PC-9 (cell line): ENCODE measurements at regions of chr5 and their contacts with region 1.

Region 1: DNA sequence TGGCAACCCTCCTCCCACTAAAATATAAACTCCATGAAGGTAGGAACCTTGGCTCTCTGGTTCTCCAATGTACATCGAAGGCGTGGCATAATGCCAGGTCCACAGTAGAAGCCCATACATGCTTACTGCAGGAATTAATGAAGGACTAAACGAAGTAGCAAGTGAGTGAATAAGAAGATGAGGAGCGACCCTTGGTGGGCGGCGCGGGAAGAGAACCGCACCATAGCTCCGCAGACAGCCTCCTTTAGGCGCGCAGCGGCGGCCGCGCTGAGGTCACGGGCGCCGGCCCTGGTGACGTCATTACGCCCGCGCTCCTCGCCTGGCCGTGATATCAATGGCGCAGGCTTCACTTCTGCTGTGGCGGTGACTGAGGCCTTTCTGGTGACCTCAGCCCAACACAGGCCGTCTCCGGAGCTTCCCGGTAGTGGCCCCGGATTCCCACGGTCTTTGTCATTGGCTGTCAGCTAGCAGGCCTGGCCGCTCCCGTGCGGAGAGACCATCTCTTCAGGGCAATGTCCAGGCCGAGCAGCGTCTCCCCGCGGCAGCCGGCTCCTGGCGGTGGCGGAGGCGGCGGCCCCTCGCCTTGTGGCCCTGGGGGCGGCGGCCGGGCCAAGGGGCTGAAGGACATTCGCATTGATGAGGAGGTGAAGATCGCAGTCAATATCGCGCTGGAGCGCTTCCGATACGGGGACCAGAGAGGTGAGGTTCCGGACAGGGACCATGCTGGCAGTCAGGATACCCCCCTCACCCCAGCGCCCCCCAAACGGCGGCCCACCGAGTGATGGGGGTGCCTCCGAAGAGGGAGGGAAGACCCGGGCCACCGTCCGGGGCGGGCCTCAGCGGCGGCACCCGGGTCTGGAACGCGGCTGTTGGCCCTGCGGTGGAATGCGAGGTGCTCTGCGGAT is at the start of gene YTHDC2:
- DNase-seq: peak; percentile 74 to 81
- H3K4me3 ChIP-seq: peak within 1 kb of the TSS; percentile 81
- H3K27ac ChIP-seq: peak within 1 kb of the TSS; percentile 64
- H3K4me1 ChIP-seq: peaks cover 22% of the 10 kb centered on the region
- H3K27me3 ChIP-seq: no peaks in the 10 kb centered on the region
- CTCF ChIP-seq: no peak
- total RNA-seq, gene YTHDC2: 14.9 and 18.6 TPM in 2 replicates

Region 2: DNA sequence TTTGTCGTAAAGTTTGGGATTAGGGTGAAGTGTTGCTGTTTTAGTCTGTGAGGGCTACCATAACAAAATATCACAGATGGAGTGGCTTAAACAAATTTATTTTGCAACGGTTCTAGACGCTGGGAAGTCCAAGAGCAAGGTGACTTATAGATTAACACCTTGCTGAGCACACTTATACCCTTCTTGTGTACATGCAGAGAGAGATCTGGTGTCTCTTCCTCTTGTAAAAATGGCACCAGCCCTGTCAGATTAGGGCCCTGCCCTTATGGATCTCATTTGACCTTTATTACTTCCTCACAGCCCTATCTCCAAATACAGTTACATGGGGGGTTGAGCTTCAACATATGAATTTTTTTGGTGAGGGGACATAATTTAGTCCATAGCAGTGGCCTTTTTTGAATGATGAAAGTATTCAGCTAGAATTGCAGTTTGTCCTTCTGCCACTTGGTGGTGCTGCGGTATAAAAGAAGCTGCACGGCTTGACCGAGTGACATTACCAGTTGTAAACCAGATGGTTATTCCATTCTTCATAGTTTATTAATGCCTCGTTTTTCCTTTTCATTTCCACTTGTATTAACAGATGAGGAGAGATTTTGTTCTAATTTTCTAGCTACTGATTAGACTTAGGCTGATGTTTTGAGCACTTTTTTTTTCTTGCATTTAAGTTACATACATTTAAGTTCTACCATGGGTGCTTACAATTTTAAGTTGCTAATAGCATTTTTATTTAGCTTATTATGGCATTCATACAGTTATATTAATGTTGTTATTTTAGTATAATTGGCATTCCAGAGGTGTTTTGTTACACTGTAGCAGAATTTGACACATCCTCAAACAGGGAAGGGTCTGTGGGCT is 517.6 kb before region 1 on chr5:
- CTCF ChIA-PET with region 1: interaction called, 6 read pairs
- POLR2A ChIA-PET with region 1: no interaction called
- intact Hi-C with region 1: loop called (anchors 1 kb)
- DNase-seq: peak; percentile 39 to 60
- H3K4me3 ChIP-seq: no peak overlapping the region
- H3K27ac ChIP-seq: no peak overlapping the region
- H3K4me1 ChIP-seq: no peaks in the 10 kb centered on the region
- H3K27me3 ChIP-seq: no peaks in the 10 kb centered on the region
- CTCF ChIP-seq: peak; percentile 96

Region 3: DNA sequence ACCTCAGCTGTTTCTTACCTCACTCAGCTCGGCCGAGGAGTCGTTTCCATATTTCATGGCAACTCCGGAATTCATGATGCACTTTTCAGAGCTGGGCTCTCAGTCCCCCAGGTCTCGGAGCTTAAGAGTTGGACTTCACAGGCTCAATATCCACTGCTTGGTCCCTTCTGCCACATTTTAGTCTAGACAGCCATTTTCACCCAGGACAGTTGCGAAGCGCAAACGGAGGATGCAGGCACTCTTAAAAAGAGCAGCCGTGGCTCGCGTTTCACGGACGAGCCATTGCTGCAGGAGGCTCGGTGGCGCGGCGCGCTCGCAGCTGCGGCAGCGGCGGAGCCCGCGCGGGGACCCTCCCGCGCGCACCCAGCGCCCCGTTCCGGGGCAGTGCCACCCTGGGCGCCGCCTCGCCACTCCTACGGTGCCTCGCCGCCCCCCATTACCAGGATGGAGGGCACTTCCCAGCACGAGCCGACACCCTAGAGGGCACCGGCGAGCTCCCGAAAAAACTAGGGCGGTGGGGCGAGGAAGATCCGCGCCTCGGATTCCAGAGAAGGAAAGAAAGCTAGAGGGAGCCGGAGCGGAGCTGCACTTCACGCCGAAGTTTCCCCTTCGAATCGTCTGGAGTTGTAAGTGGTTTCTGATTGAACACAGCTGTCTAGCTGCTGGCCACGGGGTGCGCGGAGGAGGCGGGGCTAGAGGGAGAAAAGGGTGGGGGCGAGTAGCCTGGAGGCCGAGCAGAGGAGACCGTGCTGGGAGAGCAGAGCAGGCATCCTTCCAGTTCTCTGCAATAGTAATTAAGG is 219.1 kb before region 1 on chr5:
- CTCF ChIA-PET with region 1: interaction called, 13 read pairs
- POLR2A ChIA-PET with region 1: interaction called, 4 read pairs
- intact Hi-C with region 1: no loop called
- DNase-seq: peak; percentile 69 to 70
- H3K4me3 ChIP-seq: peak overlapping the region; percentile 92
- H3K27ac ChIP-seq: no peak overlapping the region
- H3K4me1 ChIP-seq: peaks cover 12% of the 10 kb centered on the region; the same call in 1 of the 2 replicates
- H3K27me3 ChIP-seq: no peaks in the 10 kb centered on the region
- CTCF ChIP-seq: no peak

Region 4: GRCh38 chr5:113336975-113337374 is 176.7 kb before region 1 on chr5:
- CTCF ChIA-PET with region 1: interaction called, 5 read pairs
- POLR2A ChIA-PET with region 1: no interaction called
- intact Hi-C with region 1: loop called (anchors 2 kb)
- DNase-seq: peak in 1 of 2 experiments; percentile 39
- H3K4me3 ChIP-seq: no peak overlapping the region
- H3K27ac ChIP-seq: no peak overlapping the region
- H3K4me1 ChIP-seq: no peaks in the 10 kb centered on the region
- H3K27me3 ChIP-seq: no peaks in the 10 kb centered on the region
- CTCF ChIP-seq: peak; percentile 53; the same call in 1 of the 2 replicates

Region 5: GRCh38 chr5:113378959-113379541 is 134.6 kb before region 1 on chr5:
- CTCF ChIA-PET with region 1: interaction called, 6 read pairs
- POLR2A ChIA-PET with region 1: interaction called, 3 read pairs
- intact Hi-C with region 1: loop called (anchors 1 kb)
- DNase-seq: peak in 1 of 2 experiments; percentile 35
- H3K4me3 ChIP-seq: no peak overlapping the region
- H3K27ac ChIP-seq: no peak overlapping the region
- H3K4me1 ChIP-seq: no peaks in the 10 kb centered on the region
- H3K27me3 ChIP-seq: no peaks in the 10 kb centered on the region
- CTCF ChIP-seq: peak; percentile 86

Region 6: DNA sequence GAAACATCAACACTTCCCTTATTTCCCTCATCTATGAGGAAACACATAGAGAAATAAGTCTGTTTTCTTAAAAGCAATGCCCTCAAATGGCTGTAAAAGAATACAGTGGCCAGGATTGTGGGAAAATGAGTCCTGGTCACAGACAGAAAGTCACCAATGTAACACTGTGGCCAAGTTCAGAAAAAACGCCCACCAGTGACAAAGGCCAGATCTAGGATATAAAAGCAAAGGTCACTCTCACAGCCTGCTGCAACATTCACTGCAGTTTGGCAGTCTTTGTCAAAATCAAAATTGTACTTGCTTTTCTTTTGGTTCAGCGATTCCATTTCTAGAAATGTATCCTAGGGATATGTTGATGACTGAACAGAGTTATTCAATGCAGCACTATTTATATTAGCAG is 109.4 kb before region 1 on chr5:
- CTCF ChIA-PET with region 1: interaction called, 19 read pairs
- POLR2A ChIA-PET with region 1: interaction called, 5 read pairs
- intact Hi-C with region 1: no loop called
- DNase-seq: no peak
- H3K4me3 ChIP-seq: no peak overlapping the region
- H3K27ac ChIP-seq: no peak overlapping the region
- H3K4me1 ChIP-seq: no peaks in the 10 kb centered on the region
- H3K27me3 ChIP-seq: no peaks in the 10 kb centered on the region
- CTCF ChIP-seq: no peak

Region 7: DNA sequence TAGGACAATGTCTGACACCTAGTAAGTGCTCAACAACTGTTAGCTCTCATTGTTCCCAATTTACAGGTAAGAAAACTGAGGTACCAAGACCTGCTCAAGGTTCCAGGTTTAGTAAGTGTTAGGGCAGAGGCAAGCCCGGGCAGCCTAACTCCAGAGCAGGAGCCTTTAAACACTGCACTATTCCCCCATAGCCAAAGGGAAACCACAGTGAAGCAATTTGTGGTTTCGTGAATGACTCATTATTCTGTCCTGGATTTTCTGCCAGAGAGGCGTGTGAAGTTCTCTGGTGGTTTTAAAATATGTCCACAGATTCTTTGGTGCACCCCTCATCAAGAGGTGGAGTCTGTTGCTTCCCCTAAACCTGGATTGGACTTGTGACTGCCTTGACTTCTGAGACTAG is 24.3 kb before region 1 on chr5:
- CTCF ChIA-PET with region 1: no interaction called
- POLR2A ChIA-PET with region 1: no interaction called
- intact Hi-C with region 1: loop called (anchors 1 kb)
- DNase-seq: peak; percentile 68 to 95
- H3K4me3 ChIP-seq: peak overlapping the region; percentile 85; the same call in 1 of the 2 replicates
- H3K27ac ChIP-seq: peak overlapping the region; percentile 40
- H3K4me1 ChIP-seq: peaks cover 19% of the 10 kb centered on the region
- H3K27me3 ChIP-seq: no peaks in the 10 kb centered on the region
- CTCF ChIP-seq: no peak